ENCODE measurements at regions of chr3 and their contacts with region 1.

Region 1: GRCh38 chr3:197525706-197526105 is 30.1 kb downstream of the BDH1 start:
- DNase-seq: no peak
- ATAC-seq: peak; percentile 49; the same call in 1 of the 2 replicates
- H3K4me3 ChIP-seq: no peak overlapping the region
- H3K27ac ChIP-seq: no peak overlapping the region
- H3K4me1 ChIP-seq: no peaks in the 10 kb centered on the region
- H3K27me3 ChIP-seq: peaks cover 13% of the 10 kb centered on the region
- CTCF ChIP-seq: 0 out of 2 replicates have a peak, but pooled peaks have one; percentile 28

Region 2: GRCh38 chr3:196969660-196970546 is 555.8 kb before region 1 on chr3:
- CTCF ChIA-PET with region 1: no interaction called
- POLR2A ChIA-PET with region 1: interaction called, 16 read pairs
- in situ Hi-C with region 1: no loop called
- intact Hi-C with region 1: no loop called
- DNase-seq: no peak
- ATAC-seq: peak; percentile 88
- H3K4me3 ChIP-seq: peak overlapping the region; percentile 52 to 72
- H3K27ac ChIP-seq: no peak overlapping the region
- H3K4me1 ChIP-seq: peaks cover 12% of the 10 kb centered on the region
- H3K27me3 ChIP-seq: no peaks in the 10 kb centered on the region
- CTCF ChIP-seq: peak; percentile 100

Region 3: DNA sequence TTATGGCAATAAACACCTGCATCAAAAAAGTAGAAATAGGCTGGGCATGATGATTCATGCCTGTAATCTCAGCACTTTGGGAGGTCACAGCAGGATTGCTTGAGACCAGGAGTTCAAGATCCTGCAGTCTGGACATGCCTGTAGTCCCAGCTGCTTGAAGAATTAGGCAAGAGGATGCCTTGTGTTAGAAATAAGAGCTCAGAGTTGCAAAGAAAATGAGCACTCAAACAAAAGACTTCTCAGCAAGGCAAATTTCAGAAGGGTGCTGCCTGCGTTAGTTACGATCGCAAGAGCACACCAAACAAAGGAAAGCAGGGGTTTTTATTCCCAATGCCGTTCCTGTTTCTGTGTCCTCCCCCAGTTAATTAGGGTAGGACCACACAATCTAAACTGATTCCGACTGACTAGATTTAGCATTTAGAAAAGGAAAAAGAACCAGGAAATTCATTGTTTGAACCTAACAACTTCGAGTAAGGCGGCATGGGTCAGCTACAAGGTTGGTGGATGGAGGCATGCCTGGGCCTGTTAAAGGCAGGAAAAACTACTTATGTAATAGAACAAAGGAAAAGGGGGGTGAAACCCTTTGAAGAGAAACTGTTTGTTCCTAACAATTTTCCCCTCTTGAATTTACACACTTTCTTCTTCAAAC is 282.8 kb before region 1 on chr3:
- CTCF ChIA-PET with region 1: no interaction called
- POLR2A ChIA-PET with region 1: no interaction called
- in situ Hi-C with region 1: no loop called
- intact Hi-C with region 1: no loop called
- DNase-seq: no peak
- ATAC-seq: no peak
- H3K4me3 ChIP-seq: no peak overlapping the region
- H3K27ac ChIP-seq: no peak overlapping the region
- H3K4me1 ChIP-seq: no peaks in the 10 kb centered on the region
- H3K27me3 ChIP-seq: no peaks in the 10 kb centered on the region
- CTCF ChIP-seq: no peak

Region 4: DNA sequence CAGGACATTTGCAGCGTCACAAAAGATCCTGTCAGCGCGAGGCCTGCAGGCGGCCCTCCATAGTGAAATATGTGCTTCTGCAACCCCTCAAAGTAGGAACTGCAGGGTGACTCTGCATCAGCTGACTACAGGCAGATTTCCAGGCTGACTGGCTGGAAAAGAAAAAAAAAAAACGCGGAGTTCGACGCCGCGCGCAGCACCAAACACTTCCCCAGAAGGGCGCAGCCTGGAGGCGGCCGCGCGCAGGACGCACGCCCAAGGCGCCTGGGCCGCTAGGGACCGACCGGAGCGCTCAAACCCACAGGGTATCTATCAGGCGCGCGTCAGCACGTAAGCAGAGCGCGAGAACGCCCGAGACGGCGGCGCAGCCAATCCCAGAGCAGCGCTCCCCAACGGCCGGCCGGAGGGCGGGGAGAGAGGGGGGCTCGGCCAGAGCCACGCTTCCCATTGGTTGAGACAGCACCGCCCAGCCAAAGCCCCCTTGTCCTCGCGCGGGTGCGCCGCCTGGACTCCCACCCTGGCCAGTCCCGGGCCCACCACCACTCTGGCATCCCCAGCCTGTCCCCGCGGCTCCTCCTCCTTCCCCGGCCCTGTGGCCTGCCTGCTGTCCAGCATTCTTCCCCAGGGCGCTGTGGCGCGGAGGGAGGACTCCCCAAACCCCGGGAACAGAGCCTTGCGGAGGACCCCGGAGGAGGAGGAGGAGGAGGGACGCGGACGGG is 29.0 kb after region 1 on chr3:
- CTCF ChIA-PET with region 1: no interaction called
- POLR2A ChIA-PET with region 1: no interaction called
- in situ Hi-C with region 1: no loop called
- intact Hi-C with region 1: loop called (anchors 1 kb)
- DNase-seq: peak; percentile 68
- ATAC-seq: peak; percentile 98
- H3K4me3 ChIP-seq: peak overlapping the region; percentile 83 to 88
- H3K27ac ChIP-seq: peak overlapping the region; percentile 80
- H3K4me1 ChIP-seq: peaks cover 6% of the 10 kb centered on the region
- H3K27me3 ChIP-seq: peaks cover 9% of the 10 kb centered on the region
- CTCF ChIP-seq: peak; percentile 76

Measured in Panc1 (cell line).